ENCODE measurements at regions of chr20 and their contacts with region 1.

Region 1: DNA sequence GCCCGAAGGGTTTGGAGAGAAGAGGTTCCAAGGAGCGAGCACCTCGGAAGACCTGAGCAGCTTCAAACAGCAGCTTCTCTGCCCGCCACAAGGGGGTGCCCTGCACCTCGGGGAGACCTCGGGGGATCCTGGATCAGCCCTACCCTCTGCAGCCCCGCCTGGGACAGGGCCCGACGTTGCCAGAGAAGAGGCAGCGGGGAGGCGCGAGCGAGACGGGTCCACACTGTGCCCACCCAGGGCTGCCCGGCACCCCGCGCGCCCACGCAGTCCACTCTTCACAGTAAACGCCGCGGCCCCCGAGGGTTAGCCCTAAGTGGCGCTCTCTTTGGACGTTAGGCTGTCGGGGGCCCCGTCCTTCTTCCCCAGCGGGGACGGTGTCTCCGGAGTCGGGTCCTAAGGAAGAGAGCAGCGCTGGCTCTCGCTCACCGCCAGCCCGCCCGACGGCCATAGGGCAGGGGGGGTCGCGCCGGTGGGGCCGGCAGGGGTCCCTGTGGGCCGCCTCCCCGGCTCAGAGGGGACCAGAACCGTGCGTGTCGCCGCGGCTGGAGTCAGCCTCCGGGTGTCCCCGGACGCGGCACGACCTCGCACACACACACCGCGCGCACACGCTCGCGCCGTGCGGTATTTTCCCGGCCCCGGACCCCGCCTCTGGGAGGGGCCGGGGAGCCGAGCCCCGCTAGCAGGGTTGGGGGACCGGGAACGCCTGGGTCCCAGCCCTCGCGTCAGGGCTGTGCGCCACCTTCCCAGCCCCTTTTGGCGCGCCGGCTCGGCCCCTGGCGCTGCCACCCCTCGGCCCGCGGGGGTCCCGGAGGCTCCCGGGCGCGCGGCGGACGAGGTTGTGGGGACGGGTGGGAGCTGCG is 929 bp downstream of the CDH22 start:
- DNase-seq: peak; percentile 50
- H3K4me3 ChIP-seq: peak overlapping the region; percentile 7 to 54 (median 33)
- H3K27ac ChIP-seq: no peak overlapping the region
- H3K4me1 ChIP-seq: peaks cover 7 to 13% (median 10%) of the 10 kb centered on the region in 4 donors
- H3K27me3 ChIP-seq: peaks cover 100% of the 10 kb centered on the region
- CTCF ChIP-seq: peak; percentile 60 to 79 (median 76)
- EP300 ChIP-seq: no peak
- POLR2A ChIP-seq: no peak

Region 2: DNA sequence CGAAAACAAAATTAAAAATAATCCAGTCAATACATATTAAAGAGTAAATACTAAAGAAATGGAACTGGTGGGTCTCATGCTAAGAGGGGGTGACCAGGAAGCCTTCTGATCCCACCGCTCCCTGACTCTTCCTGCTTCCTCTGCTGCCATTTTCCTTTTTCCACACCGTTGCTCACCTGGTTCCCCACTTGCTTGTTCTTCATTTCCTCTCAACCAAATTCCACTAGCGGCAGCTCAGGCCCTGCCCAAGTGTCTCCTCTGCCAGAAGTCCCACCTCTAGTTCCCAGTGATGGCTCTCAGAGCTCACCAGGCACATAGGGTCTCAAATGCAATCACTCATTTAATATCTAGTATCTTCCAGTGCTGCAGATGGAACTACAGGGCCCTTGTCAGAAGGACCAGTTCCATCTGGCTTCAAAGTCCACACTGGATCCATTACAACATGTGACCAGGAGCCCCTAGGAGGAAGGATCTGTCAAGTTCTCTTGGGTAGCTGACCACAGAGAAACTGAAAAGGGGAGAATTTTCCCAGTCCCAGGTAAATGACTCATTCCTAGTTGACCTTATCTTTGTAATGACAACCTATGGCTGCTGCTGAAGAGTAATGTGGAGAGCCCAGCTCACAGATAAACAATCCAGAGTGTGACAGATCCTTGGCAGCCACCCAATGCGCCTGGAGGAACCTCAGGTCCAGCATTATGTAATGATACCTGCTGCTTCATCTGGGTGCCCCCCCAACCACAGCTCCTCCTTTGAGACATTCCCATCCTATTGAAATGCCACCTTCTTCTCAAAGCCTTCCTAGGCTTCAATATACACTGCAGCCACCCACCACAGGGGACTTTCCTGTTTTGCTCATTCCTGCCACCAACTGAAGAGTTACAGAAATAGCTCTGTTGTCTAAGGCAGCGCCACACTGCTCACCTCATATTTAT is 60.9 kb after region 1 on chr20:
- in situ Hi-C with region 1: no loop called
- intact Hi-C with region 1: no loop called
- DNase-seq: no peak
- H3K4me3 ChIP-seq: no peak overlapping the region
- H3K27ac ChIP-seq: no peak overlapping the region
- H3K4me1 ChIP-seq: peaks cover 4 to 12% (median 8%) of the 10 kb centered on the region in 4 donors
- H3K27me3 ChIP-seq: no peaks in the 10 kb centered on the region
- CTCF ChIP-seq: no peak
- EP300 ChIP-seq: no peak
- POLR2A ChIP-seq: no peak

Region 3: GRCh38 chr20:46416421-46416820 is 109.1 kb after region 1 on chr20:
- in situ Hi-C with region 1: no loop called
- intact Hi-C with region 1: loop called (anchors 5 kb)
- DNase-seq: no peak
- H3K4me3 ChIP-seq: no peak overlapping the region
- H3K27ac ChIP-seq: no peak overlapping the region
- H3K4me1 ChIP-seq: no peaks in the 10 kb centered on the region
- H3K27me3 ChIP-seq: peaks cover 13% of the 10 kb centered on the region
- CTCF ChIP-seq: no peak
- EP300 ChIP-seq: no peak
- POLR2A ChIP-seq: no peak